BJ (cell line): ENCODE measurements at regions of chr4 and their contacts with region 1.

Region 1: DNA sequence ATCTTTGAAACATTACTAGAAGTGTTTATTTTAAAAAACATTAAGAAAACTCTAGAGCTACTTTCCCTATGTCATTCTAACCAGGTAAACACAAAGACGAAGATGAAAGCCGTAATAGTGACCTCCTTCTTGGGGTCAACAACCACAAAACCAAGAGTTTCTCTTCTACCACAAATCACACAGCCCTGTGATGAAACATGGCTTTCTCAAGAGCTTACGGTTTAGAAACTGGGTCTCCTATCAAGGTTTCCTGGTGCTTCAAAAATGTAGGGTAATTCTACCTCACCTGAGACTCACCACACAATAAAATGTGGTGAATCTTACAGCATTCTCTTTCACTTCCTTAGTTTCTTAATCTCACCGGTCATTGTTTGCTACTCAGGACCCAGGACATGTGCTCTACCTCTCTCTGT is 50.9 kb downstream of the CORIN start:
- DNase-seq: no peak
- H3K4me3 ChIP-seq: no peak overlapping the region
- H3K27me3 ChIP-seq: no peaks in the 10 kb centered on the region
- CTCF ChIP-seq: no peak

Region 2: DNA sequence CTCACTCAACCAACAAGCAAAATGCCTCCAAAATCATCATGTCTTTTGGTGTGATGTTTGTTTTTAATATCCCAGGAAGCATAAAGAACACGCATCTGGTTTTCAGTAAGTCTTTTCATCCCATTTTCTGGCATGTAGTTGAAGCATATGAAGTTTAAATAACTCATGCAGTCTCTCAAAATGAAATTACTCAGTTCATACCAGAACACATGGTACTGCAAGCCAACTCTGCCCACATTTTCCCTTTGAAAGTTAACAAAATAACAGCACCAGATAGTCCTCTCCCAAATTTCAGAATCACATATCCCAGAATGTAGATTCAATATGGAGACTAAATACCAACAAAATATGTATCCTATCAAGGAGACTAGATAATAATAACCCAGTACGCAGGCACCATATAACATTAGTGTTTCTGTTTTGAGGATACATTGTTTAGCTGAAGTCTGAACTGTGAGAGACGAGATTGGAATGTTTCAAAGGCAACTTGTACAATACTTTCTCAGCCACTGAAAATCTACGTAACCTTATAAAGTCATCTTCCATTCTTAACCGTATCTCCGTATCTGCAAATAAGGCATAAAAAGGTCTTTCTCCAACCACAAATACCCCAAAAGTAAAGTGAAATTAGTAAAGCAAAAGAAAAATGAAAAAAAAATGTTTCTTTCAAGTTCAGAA is 27.8 kb after region 1 on chr4:
- CTCF ChIA-PET with region 1: no interaction called
- POLR2A ChIA-PET with region 1: interaction called, 10 read pairs
- DNase-seq: no peak
- H3K4me3 ChIP-seq: no peak overlapping the region
- H3K27me3 ChIP-seq: peaks cover 1% of the 10 kb centered on the region
- CTCF ChIP-seq: no peak

Region 3: GRCh38 chr4:47852136-47852535 is 65.2 kb after region 1 on chr4:
- CTCF ChIA-PET with region 1: no interaction called
- POLR2A ChIA-PET with region 1: no interaction called
- DNase-seq: no peak
- H3K4me3 ChIP-seq: no peak overlapping the region
- H3K27me3 ChIP-seq: no peaks in the 10 kb centered on the region
- CTCF ChIP-seq: no peak

Region 4: DNA sequence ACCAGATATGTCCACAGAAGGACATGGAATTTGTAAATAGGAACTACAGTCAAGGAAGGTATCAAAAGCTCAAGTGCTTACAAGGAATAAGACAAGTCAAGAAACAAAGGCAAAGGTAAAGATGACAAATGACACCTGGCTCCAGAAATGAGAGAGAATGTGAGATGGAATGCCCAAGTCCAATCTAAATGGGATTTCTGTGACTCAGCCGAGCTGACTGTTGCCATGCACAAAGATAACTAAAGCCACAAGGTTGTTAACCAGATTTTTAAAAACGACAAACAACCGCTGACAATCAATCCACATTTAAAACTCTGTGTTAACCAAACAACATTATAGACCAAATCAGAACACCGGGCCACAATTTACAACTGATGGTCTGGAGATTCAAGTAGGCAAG is 126.4 kb after region 1 on chr4:
- CTCF ChIA-PET with region 1: no interaction called
- POLR2A ChIA-PET with region 1: no interaction called
- DNase-seq: no peak
- H3K4me3 ChIP-seq: peak overlapping the region; percentile 98
- H3K27me3 ChIP-seq: no peaks in the 10 kb centered on the region
- CTCF ChIP-seq: no peak